CD8-positive, alpha-beta T cell (primary cell): ENCODE measurements at regions of chr9 and their contacts with region 1.

Region 1: DNA sequence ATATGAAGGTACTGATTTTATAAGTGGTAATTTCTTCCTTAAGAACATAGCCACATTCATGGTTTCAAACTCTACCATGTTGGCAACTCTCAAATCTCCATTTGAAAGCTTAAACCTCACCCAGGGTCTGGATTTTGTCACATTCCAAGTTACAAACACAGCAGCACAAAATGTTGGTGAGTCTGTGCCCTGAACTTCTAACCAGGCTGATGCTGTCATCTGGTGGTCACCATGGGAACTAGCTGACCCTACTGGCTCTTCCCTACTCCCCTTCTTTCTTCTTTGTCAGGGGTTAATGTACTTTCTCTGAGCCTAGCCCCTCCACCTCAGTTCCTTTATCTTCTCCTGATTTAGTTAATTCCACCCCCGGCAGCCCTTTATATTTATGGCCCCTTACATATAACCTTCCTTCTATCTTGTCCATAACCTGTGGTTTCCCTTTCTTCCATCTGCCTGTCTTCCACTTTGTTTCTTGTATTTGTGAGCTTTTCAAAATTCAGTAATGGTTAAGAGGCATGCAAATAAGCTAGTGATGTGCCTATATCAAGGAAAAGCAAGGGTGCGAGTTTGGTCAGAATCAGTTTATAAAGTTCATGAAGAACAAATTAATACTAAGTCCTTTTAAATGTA is 35.9 kb downstream of the TGFBR1 start:
- DNase-seq: peak in 8 of 9 experiments; percentile 23 to 80 (median 56)
- ATAC-seq: peak; percentile 91
- H3K4me3 ChIP-seq: no peak overlapping the region
- H3K4me3 Mint-ChIP-seq: no peak overlapping the region
- H3K27ac ChIP-seq: peak overlapping the region in 1 of 2 experiments; percentile 7
- H3K27ac Mint-ChIP-seq: peak overlapping the region; percentile 52
- H3K4me1 ChIP-seq: peaks cover 29% of the 10 kb centered on the region
- H3K4me1 Mint-ChIP-seq: peaks cover 52% of the 10 kb centered on the region
- H3K27me3 ChIP-seq: no peaks in the 10 kb centered on the region
- H3K27me3 Mint-ChIP-seq: no peaks in the 10 kb centered on the region
- CTCF ChIP-seq: peak; percentile 89

Region 2: DNA sequence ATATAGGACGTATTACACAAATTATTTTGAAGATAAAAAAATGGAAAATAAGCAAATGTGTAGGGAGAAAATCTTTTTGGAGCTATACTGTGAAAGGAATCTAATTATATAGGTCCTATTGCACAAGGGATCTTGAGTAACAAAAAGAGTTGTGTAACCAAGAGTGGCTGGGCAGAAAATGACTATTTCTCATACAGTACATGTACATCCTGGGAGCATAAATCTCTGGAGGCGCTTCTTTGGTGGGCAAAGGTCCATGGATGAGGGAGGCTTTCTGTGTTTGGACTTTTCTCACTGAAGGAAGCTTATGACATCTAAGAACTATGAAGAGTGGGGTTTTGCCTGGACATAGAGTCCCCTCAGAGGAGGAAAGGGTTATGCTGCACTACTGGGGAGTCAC is 374.2 kb before region 1 on chr9:
- CTCF ChIA-PET with region 1: no interaction called
- POLR2A ChIA-PET with region 1: no interaction called
- intact Hi-C with region 1: no loop called
- DNase-seq: no peak
- ATAC-seq: no peak
- H3K4me3 ChIP-seq: no peak overlapping the region
- H3K4me3 Mint-ChIP-seq: no peak overlapping the region
- H3K27ac ChIP-seq: no peak overlapping the region
- H3K27ac Mint-ChIP-seq: no peak overlapping the region
- H3K4me1 ChIP-seq: no peaks in the 10 kb centered on the region
- H3K4me1 Mint-ChIP-seq: no peaks in the 10 kb centered on the region
- H3K27me3 ChIP-seq: no peaks in the 10 kb centered on the region
- H3K27me3 Mint-ChIP-seq: no peaks in the 10 kb centered on the region
- CTCF ChIP-seq: no peak

Region 3: GRCh38 chr9:98848450-98849149 is 292.2 kb before region 1 on chr9:
- CTCF ChIA-PET with region 1: interaction called, 32 read pairs
- POLR2A ChIA-PET with region 1: no interaction called
- intact Hi-C with region 1: loop called (anchors 1 kb)
- DNase-seq: peak; percentile 47 to 83 (median 76)
- ATAC-seq: peak; percentile 90
- H3K4me3 ChIP-seq: no peak overlapping the region
- H3K4me3 Mint-ChIP-seq: no peak overlapping the region
- H3K27ac ChIP-seq: no peak overlapping the region
- H3K27ac Mint-ChIP-seq: no peak overlapping the region
- H3K4me1 ChIP-seq: no peaks in the 10 kb centered on the region
- H3K4me1 Mint-ChIP-seq: peaks cover 3% of the 10 kb centered on the region
- H3K27me3 ChIP-seq: no peaks in the 10 kb centered on the region
- H3K27me3 Mint-ChIP-seq: no peaks in the 10 kb centered on the region
- CTCF ChIP-seq: peak; percentile 95

Region 4: GRCh38 chr9:98998441-98999151 is 142.2 kb before region 1 on chr9:
- CTCF ChIA-PET with region 1: interaction called, 374 read pairs
- POLR2A ChIA-PET with region 1: interaction called, 5 read pairs
- intact Hi-C with region 1: loop called (anchors 1 kb)
- DNase-seq: peak in 8 of 9 experiments; percentile 17 to 67 (median 60)
- ATAC-seq: peak; percentile 59
- H3K4me3 ChIP-seq: no peak overlapping the region
- H3K4me3 Mint-ChIP-seq: no peak overlapping the region
- H3K27ac ChIP-seq: no peak overlapping the region
- H3K27ac Mint-ChIP-seq: no peak overlapping the region
- H3K4me1 ChIP-seq: peaks cover 19% of the 10 kb centered on the region
- H3K4me1 Mint-ChIP-seq: peaks cover 17% of the 10 kb centered on the region
- H3K27me3 ChIP-seq: no peaks in the 10 kb centered on the region
- H3K27me3 Mint-ChIP-seq: no peaks in the 10 kb centered on the region
- CTCF ChIP-seq: peak; percentile 62

Region 5: GRCh38 chr9:99035313-99035985 is 105.4 kb before region 1 on chr9:
- CTCF ChIA-PET with region 1: interaction called, 15 read pairs
- POLR2A ChIA-PET with region 1: no interaction called
- intact Hi-C with region 1: no loop called
- DNase-seq: no peak
- ATAC-seq: no peak
- H3K4me3 ChIP-seq: no peak overlapping the region
- H3K4me3 Mint-ChIP-seq: no peak overlapping the region
- H3K27ac ChIP-seq: no peak overlapping the region
- H3K27ac Mint-ChIP-seq: no peak overlapping the region
- H3K4me1 ChIP-seq: peaks cover 7% of the 10 kb centered on the region
- H3K4me1 Mint-ChIP-seq: peaks cover 26% of the 10 kb centered on the region
- H3K27me3 ChIP-seq: no peaks in the 10 kb centered on the region
- H3K27me3 Mint-ChIP-seq: peaks cover 2% of the 10 kb centered on the region
- CTCF ChIP-seq: no peak

Region 6: DNA sequence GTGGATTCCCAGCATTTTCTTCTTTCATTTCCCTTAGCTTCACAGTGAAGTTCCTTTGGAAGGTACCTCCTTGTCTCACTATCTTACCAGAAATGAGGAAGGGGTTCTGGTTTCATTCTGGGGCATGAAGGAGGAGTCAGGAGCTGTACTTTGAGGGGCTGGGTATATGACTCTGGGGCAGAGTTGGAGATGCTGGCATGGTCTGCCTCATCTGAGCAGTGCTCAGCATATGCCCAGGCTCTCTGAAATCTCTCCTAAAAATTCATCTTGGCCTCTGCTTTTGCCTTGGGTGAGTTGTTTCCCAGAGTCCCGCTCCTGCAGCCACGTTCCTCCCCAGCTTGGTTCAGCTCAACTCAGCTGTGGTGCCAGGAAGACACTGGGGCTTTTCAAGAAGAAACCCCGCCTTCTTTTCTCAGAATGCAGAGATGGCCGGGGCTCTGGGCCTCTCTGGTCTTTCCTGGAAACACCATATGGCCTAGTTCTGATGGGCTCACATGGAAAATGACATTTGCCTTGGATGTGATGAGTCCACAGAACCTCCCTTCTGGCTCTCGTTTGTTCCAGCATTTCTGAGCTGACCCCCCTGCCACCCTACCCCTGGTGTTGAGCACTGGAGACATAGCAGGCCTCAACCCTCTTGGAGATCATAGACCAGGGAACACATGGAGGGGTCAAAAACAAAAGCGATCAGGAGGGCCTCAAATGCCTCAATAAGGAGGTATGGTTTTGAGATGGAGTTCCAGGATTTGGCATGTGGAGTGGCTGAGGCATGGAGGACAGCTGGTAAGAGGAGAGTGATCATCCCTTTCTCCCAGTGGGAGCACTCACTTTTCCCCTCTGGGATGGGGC is 47.9 kb before region 1 on chr9:
- CTCF ChIA-PET with region 1: interaction called, 11 read pairs
- POLR2A ChIA-PET with region 1: interaction called, 4 read pairs
- intact Hi-C with region 1: no loop called
- DNase-seq: peak in 3 of 9 experiments; percentile 16 to 41 (median 26)
- ATAC-seq: peak; percentile 38
- H3K4me3 ChIP-seq: no peak overlapping the region
- H3K4me3 Mint-ChIP-seq: peak overlapping the region; percentile 58
- H3K27ac ChIP-seq: no peak overlapping the region
- H3K27ac Mint-ChIP-seq: no peak overlapping the region
- H3K4me1 ChIP-seq: peaks cover 17% of the 10 kb centered on the region
- H3K4me1 Mint-ChIP-seq: peaks cover 31% of the 10 kb centered on the region
- H3K27me3 ChIP-seq: no peaks in the 10 kb centered on the region
- H3K27me3 Mint-ChIP-seq: no peaks in the 10 kb centered on the region
- CTCF ChIP-seq: no peak

Region 7: DNA sequence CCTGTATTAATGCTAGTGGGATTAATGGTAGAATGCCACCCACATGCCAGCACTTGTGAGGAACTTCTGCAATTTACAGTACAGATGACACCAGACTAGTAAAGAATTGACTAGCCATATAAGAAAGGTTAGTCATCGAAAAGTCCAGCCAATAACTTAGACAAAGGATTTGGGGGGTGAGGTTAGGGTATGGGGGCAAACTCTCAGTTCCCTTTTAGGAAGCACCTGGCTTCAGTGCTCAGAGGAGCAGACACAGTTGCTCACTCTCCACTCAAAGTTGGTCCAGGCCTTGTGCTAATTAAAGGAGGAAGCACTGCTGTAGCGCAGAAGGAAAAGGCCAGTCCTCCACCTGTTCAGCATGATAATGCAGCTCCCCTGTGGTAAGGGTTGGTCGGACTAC is 10.7 kb before region 1 on chr9:
- CTCF ChIA-PET with region 1: interaction called, 10 read pairs
- POLR2A ChIA-PET with region 1: interaction called, 9 read pairs
- intact Hi-C with region 1: no loop called
- DNase-seq: no peak
- ATAC-seq: no peak
- H3K4me3 ChIP-seq: no peak overlapping the region
- H3K4me3 Mint-ChIP-seq: peak overlapping the region; percentile 38
- H3K27ac ChIP-seq: peak overlapping the region in 1 of 2 experiments; percentile 38
- H3K27ac Mint-ChIP-seq: peak overlapping the region; percentile 85
- H3K4me1 ChIP-seq: peaks cover 88% of the 10 kb centered on the region
- H3K4me1 Mint-ChIP-seq: peaks cover 86% of the 10 kb centered on the region
- H3K27me3 ChIP-seq: no peaks in the 10 kb centered on the region
- H3K27me3 Mint-ChIP-seq: no peaks in the 10 kb centered on the region
- CTCF ChIP-seq: no peak